ENCODE measurements at regions of chr18 and their contacts with region 1.

Region 1: GRCh38 chr18:36809590-36810381 is 19.0 kb downstream of the TPGS2 start:
- DNase-seq: peak; percentile 32 to 65 (median 62)
- H3K4me3 ChIP-seq: no peak overlapping the region
- H3K4me3 Mint-ChIP-seq: no peak overlapping the region
- H3K27ac ChIP-seq: no peak overlapping the region
- H3K27ac Mint-ChIP-seq: peak overlapping the region in 1 of 7 donors; percentile 16
- H3K4me1 ChIP-seq: no peaks in the 10 kb centered on the region
- H3K4me1 Mint-ChIP-seq: peaks cover 2% of the 10 kb centered on the region
- H3K27me3 ChIP-seq: no peaks in the 10 kb centered on the region
- H3K27me3 Mint-ChIP-seq: no peaks in the 10 kb centered on the region
- CTCF ChIP-seq: peak; percentile 85

Region 2: GRCh38 chr18:36015629-36016028 is 794.2 kb before region 1 on chr18:
- intact Hi-C with region 1: loop called in 1 of 2 experiments (anchors 10 kb)
- DNase-seq: no peak
- H3K4me3 ChIP-seq: no peak overlapping the region
- H3K4me3 Mint-ChIP-seq: no peak overlapping the region
- H3K27ac ChIP-seq: no peak overlapping the region
- H3K27ac Mint-ChIP-seq: no peak overlapping the region
- H3K4me1 ChIP-seq: no peaks in the 10 kb centered on the region
- H3K4me1 Mint-ChIP-seq: peaks cover 5% of the 10 kb centered on the region
- H3K27me3 ChIP-seq: no peaks in the 10 kb centered on the region
- H3K27me3 Mint-ChIP-seq: no peaks in the 10 kb centered on the region
- CTCF ChIP-seq: no peak

Region 3: DNA sequence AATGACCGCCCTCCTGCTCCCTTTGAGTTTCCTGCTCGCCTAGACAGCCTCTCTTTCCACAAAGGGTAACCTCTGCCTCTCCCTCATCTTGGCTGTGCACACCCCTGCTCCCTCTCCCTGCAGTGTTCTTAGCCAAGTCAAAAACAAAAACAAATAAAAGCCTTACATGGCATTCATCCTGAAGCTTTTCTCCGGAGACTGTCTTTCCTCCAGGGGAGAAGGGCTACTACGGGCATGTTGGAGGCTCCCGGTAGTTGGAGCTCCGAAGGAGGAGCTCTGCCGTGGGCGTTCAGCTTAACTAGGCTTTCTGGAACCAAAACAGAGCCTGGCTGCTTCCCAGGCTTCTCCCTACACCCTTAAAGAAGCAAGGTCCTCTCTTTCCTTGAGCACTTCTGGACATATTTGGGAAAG is 85.2 kb before region 1 on chr18:
- intact Hi-C with region 1: no loop called
- DNase-seq: no peak
- H3K4me3 ChIP-seq: no peak overlapping the region
- H3K4me3 Mint-ChIP-seq: no peak overlapping the region
- H3K27ac ChIP-seq: no peak overlapping the region
- H3K27ac Mint-ChIP-seq: no peak overlapping the region
- H3K4me1 ChIP-seq: no peaks in the 10 kb centered on the region
- H3K4me1 Mint-ChIP-seq: no peaks in the 10 kb centered on the region
- H3K27me3 ChIP-seq: no peaks in the 10 kb centered on the region
- H3K27me3 Mint-ChIP-seq: peaks cover 3 to 6% (median 5%) of the 10 kb centered on the region in 3 donors
- CTCF ChIP-seq: no peak